K562 (cell line): ENCODE measurements at regions of chr12 and their contacts with region 1.

Region 1: DNA sequence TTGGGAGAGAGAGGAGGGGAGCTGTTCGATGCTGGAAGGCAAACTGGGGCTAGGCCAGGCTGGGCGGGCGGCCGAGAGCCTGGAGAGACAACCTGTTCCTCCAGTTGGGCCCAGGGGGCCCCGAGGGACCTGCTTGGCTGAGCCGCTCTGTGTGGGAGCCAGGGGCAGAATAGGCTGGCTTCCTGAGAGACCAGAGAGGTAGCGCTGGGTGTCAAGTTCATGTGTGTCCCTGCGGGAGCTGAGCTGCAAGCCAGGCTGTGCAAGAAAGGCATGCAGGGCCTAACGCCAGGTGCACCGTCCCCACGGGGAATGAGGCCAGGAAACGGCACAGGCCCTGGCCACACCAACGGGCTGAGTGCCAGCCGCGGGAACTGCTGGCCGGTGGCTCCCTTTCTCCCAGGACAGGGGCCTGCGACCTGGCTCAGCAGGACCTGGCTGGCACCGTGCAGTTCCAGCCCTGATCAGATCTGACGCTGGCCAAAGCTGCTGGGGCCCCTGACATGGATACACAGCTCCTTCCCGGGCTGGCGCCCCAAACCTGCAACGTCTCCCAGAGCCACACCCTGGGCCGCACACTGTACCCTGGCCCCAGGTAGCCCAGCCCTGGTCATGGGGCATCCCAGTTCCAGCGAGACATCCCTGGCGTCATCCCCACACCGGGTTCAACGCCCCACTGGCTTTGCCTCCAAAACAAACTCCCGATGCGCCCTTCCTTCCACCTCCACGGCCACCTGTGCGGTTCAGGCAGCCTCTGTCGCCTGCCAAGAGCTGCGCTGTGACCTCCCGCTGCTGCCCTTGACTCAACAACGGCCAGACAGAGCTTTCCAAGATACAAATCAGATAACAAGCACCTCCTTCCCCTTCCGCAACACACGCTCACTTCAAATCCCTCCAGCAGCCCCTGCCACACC is 65.0 kb downstream of the RFLNA start:
- DNase-seq: no peak
- ATAC-seq: no peak
- H3K4me3 ChIP-seq: no peak overlapping the region
- H3K27ac ChIP-seq: no peak overlapping the region
- H3K4me1 ChIP-seq: peaks cover 0 to 35% of the 10 kb centered on the region in 2 experiments; a peak in 2 of 5 replicates
- H3K27me3 ChIP-seq: no peaks in the 10 kb centered on the region
- CTCF ChIP-seq: no peak
- EP300 ChIP-seq: no peak
- POLR2A ChIP-seq: no peak
- RAD21 ChIP-seq: no peak

Region 2: DNA sequence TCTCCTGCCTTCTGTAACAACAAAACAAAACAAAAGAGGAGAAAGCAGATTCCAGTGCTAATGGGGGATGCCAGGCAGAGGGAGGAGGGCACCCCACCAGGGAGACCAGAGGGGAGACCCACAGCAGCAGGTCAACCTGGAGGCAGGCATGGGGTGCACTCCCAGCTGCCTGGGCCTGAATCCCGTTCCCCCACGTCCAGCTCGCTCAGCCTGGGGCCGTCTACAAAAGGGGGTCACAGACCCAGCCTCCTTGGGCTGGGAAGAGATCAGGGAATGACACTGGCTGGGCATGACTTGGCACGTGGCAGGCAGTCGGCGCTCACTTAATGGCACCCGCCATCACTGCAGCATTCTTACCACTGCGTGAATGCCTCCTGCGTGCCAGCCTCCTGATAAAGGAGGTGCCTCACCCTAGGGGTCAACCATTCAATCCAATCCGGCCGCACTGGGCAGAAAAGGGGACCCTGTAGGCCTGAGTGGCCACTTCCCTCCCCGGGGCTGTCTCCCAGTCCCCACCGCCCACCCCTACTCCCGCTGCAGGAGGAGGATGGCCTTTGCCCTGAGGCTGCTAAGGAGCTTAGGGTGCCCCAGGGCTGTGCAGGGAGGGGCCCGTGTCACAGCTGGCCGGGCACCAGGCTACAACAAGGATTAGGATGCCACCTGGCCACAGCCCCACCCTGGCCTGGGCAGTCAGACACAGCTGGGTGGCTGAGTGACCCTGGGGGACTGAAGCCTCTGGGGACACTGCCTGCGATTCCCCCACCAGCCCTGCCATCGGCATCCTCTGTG is 119.9 kb after region 1 on chr12:
- CTCF ChIA-PET with region 1: no interaction called
- POLR2A ChIA-PET with region 1: interaction called, 3 read pairs
- in situ Hi-C with region 1: no loop called
- intact Hi-C with region 1: loop called (anchors 10 kb)
- DNase-seq: no peak
- ATAC-seq: no peak
- H3K4me3 ChIP-seq: no peak overlapping the region
- H3K27ac ChIP-seq: no peak overlapping the region
- H3K4me1 ChIP-seq: peaks cover 0 to 52% of the 10 kb centered on the region in 2 experiments; a peak in 3 of 5 replicates
- H3K27me3 ChIP-seq: no peaks in the 10 kb centered on the region
- CTCF ChIP-seq: no peak
- EP300 ChIP-seq: no peak
- POLR2A ChIP-seq: no peak
- RAD21 ChIP-seq: no peak